CD14-positive monocyte (primary cell): ENCODE measurements at regions of chr15 and their contacts with region 1.

Region 1: GRCh38 chr15:98311566-98312188 is 336.7 kb upstream of the IGF1R start:
- DNase-seq: peak; percentile 25 to 54 (median 39)
- H3K4me3 ChIP-seq: no peak overlapping the region
- H3K4me3 Mint-ChIP-seq: peak overlapping the region in 1 of 2 donors; percentile 69
- H3K27ac ChIP-seq: no peak overlapping the region
- H3K27ac Mint-ChIP-seq: peak overlapping the region in 1 of 7 donors; percentile 15
- H3K4me1 ChIP-seq: no peaks in the 10 kb centered on the region
- H3K4me1 Mint-ChIP-seq: no peaks in the 10 kb centered on the region
- H3K27me3 ChIP-seq: no peaks in the 10 kb centered on the region
- H3K27me3 Mint-ChIP-seq: peaks cover 14 to 23% (median 15%) of the 10 kb centered on the region in 3 donors
- CTCF ChIP-seq: peak; percentile 88

Region 2: DNA sequence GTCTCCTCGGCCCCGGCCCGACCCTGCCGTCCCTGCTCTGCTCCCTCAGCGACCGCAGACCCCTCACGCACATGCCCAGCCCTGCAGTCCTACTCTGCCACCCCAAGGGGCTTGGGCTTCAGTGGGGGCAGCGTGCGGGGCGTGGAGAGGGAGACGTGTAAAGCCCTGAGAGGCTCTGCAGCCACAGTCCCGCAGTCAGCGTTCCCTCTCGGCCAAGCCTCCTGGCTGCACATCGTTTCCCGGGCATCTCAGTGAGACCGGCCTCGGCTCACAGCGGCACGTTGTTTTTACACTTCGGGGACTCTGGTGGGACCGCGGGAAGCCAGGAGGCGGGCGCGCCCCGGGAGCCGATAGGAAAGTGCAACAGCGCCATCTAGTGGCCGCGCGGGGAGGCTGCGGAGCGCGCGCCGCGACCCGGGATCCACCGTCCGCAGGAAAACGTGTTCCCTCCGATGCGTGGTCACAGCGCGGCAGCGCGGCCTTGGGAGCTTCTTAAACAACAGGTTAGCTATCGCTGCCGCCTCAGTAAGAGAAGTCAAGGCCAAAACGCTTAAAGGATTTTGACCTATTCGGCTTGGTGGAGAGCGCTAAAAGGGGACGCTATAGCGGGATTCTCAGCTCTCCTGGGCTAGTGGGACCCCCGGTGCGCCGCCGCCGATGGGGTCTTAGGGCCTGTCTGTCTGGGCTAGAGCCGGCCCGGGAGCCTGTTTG is 109.9 kb after region 1 on chr15:
- intact Hi-C with region 1: loop called (anchors 2 to 5 kb)
- DNase-seq: peak; percentile 21 to 41 (median 23)
- H3K4me3 ChIP-seq: peak overlapping the region in 1 of 3 experiments; percentile 37
- H3K4me3 Mint-ChIP-seq: peak overlapping the region in 1 of 2 donors; percentile 52
- H3K27ac ChIP-seq: no peak overlapping the region
- H3K27ac Mint-ChIP-seq: no peak overlapping the region
- H3K4me1 ChIP-seq: peaks cover 7 to 8% of the 10 kb centered on the region in 2 donors
- H3K4me1 Mint-ChIP-seq: peaks cover 6% of the 10 kb centered on the region
- H3K27me3 ChIP-seq: peaks cover 14 to 29% of the 10 kb centered on the region in 2 donors
- H3K27me3 Mint-ChIP-seq: peaks cover 38 to 49% (median 48%) of the 10 kb centered on the region in 3 donors
- CTCF ChIP-seq: peak; percentile 99

Region 3: GRCh38 chr15:98428253-98428989 is 116.7 kb after region 1 on chr15:
- intact Hi-C with region 1: loop called in 1 of 2 experiments (anchors 5 kb)
- DNase-seq: peak; percentile 12 to 33 (median 19)
- H3K4me3 ChIP-seq: peak overlapping the region in 1 of 3 experiments; percentile 61
- H3K4me3 Mint-ChIP-seq: peak overlapping the region; percentile 44 to 86
- H3K27ac ChIP-seq: no peak overlapping the region
- H3K27ac Mint-ChIP-seq: no peak overlapping the region
- H3K4me1 ChIP-seq: peaks cover 9 to 10% of the 10 kb centered on the region in 2 donors
- H3K4me1 Mint-ChIP-seq: peaks cover 9% of the 10 kb centered on the region
- H3K27me3 ChIP-seq: peaks cover 3 to 25% of the 10 kb centered on the region in 2 donors
- H3K27me3 Mint-ChIP-seq: peaks cover 40 to 46% (median 44%) of the 10 kb centered on the region in 3 donors
- CTCF ChIP-seq: peak; percentile 90